ENCODE measurements at regions of chr15 and their contacts with region 1.

Region 1: DNA sequence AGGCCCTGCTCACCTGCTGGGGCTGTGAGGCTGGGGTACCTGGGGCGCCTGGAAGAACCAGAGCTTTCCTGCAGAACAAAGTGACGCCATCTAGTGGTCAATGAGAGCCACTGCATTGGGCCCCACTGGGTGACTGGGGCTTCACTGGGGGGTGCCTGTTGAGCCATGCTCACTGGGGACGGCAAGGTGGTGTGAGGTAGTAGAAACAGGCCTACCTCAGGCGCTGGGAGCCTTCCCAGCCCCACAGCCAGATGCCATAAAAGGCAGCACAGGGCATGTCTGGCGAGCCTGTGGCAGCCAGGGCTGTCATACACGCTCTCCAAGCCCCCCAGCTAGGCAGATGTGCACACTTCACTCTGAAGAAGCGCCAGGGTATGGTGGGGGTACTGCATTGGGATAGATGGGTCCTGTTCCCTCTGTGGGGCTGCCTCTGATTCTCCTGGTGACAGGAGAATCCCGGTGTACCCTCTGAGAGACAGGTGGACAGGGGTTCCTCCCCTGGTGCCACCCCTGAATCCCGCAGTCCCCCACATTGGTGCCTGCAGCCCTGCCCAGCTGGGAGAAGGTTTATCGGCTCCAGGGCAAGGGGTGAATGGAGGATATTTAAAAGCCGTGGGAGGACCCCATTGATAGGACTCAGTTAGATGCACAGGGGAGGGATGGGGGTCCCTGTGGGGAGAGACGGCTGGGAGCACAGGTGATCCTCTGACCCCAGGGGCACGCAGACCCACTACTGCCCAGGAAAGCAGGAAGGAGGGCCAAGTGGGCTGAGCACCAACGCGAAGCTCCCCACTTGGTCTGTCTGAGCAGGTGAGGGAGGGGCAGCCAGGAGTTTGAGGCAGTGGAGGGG is 178.8 kb downstream of the NSMCE3 start:
- DNase-seq: peak in 7 of 9 donors; percentile 34 to 55 (median 44)
- ATAC-seq: peak; percentile 67
- H3K4me3 ChIP-seq: peak overlapping the region; percentile 34
- H3K4me3 Mint-ChIP-seq: peak overlapping the region in 2 of 10 donors; percentile 59 to 70
- H3K27ac ChIP-seq: no peak overlapping the region
- H3K27ac Mint-ChIP-seq: peak overlapping the region in 6 of 9 donors; percentile 14 to 85 (median 54)
- H3K4me1 ChIP-seq: peaks cover 12 to 17% of the 10 kb centered on the region in 2 donors
- H3K4me1 Mint-ChIP-seq: peaks cover 13 to 51% (median 38%) of the 10 kb centered on the region in 7 donors
- H3K27me3 ChIP-seq: no peaks in the 10 kb centered on the region
- H3K27me3 Mint-ChIP-seq: no peaks in the 10 kb centered on the region

Region 2: GRCh38 chr15:28873541-28874190 is 217.2 kb before region 1 on chr15:
- CTCF ChIA-PET with region 1: interaction called, 6 read pairs
- POLR2A ChIA-PET with region 1: no interaction called
- intact Hi-C with region 1: loop called in 1 of 2 experiments (anchors 1 kb)
- DNase-seq: peak in 7 of 9 donors; percentile 53 to 71 (median 58)
- ATAC-seq: peak; percentile 79
- H3K4me3 ChIP-seq: no peak overlapping the region
- H3K4me3 Mint-ChIP-seq: no peak overlapping the region
- H3K27ac ChIP-seq: no peak overlapping the region
- H3K27ac Mint-ChIP-seq: peak overlapping the region in 3 of 9 donors; percentile 28 to 70 (median 36)
- H3K4me1 ChIP-seq: peaks cover 0 to 9% of the 10 kb centered on the region in 2 donors
- H3K4me1 Mint-ChIP-seq: peaks cover 0 to 32% (median 22%) of the 10 kb centered on the region in 7 donors
- H3K27me3 ChIP-seq: no peaks in the 10 kb centered on the region
- H3K27me3 Mint-ChIP-seq: no peaks in the 10 kb centered on the region

Region 3: GRCh38 chr15:29124581-29125381 is 33.9 kb after region 1 on chr15:
- CTCF ChIA-PET with region 1: no interaction called
- POLR2A ChIA-PET with region 1: no interaction called
- intact Hi-C with region 1: no loop called
- DNase-seq: no peak
- ATAC-seq: no peak
- H3K4me3 ChIP-seq: no peak overlapping the region
- H3K4me3 Mint-ChIP-seq: no peak overlapping the region
- H3K27ac ChIP-seq: no peak overlapping the region
- H3K27ac Mint-ChIP-seq: peak overlapping the region in 1 of 9 donors; percentile 17
- H3K4me1 ChIP-seq: no peaks in the 10 kb centered on the region
- H3K4me1 Mint-ChIP-seq: peaks cover 0 to 1% (median 0%) of the 10 kb centered on the region in 7 donors
- H3K27me3 ChIP-seq: no peaks in the 10 kb centered on the region
- H3K27me3 Mint-ChIP-seq: peaks cover 0 to 4% (median 0%) of the 10 kb centered on the region in 5 donors

Region 4: GRCh38 chr15:29220852-29221251 is 130.0 kb after region 1 on chr15:
- CTCF ChIA-PET with region 1: no interaction called
- POLR2A ChIA-PET with region 1: no interaction called
- intact Hi-C with region 1: no loop called
- DNase-seq: no peak
- ATAC-seq: no peak
- H3K4me3 ChIP-seq: no peak overlapping the region
- H3K4me3 Mint-ChIP-seq: no peak overlapping the region
- H3K27ac ChIP-seq: no peak overlapping the region
- H3K27ac Mint-ChIP-seq: no peak overlapping the region
- H3K4me1 ChIP-seq: no peaks in the 10 kb centered on the region
- H3K4me1 Mint-ChIP-seq: no peaks in the 10 kb centered on the region
- H3K27me3 ChIP-seq: peaks cover 0 to 2% of the 10 kb centered on the region in 2 donors
- H3K27me3 Mint-ChIP-seq: peaks cover 5 to 25% (median 23%) of the 10 kb centered on the region in 5 donors